Activated T-helper 2 cell treated with anti-CD3 and anti-CD28 coated beads, Interferon-gamma antibody, Interleukin-2, Interleukin-4, amounts not matched to agents 10 μg/mL and 5 μg/mL and 100 μg/mL, durations not matched to agents 14 hours and 24 hours and 36 hours (primary cell): ENCODE measurements at regions of chr1 and their contacts with region 1.

Region 1: DNA sequence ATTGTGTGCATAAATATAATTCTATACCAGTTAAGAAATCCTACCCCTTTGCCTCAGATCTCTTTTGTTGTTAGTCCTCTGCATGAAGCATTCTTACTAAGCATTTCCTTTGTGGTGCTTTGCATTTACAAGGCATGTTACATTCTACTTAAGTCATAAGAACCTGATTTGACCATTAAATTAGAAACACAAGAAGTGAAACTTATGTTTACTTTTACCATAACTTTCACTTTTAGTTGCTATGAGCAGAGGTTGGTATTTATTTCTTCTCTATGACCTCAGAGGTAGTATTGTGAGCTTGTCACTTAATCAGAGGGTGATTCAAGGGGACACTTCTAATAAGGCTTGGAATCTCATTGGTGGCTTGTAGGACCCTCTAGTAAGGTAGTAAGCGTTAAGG is 9.0 kb downstream of the FAM20B start:
- DNase-seq: no peak
- H3K4me3 Mint-ChIP-seq: no peak overlapping the region
- H3K27ac Mint-ChIP-seq: peak overlapping the region; percentile 82
- H3K4me1 Mint-ChIP-seq: peaks cover 77% of the 10 kb centered on the region
- H3K27me3 Mint-ChIP-seq: no peaks in the 10 kb centered on the region

Region 2: GRCh38 chr1:179046808-179047635 is 12.3 kb after region 1 on chr1:
- intact Hi-C with region 1: no loop called
- DNase-seq: no peak
- H3K4me3 Mint-ChIP-seq: no peak overlapping the region
- H3K27ac Mint-ChIP-seq: no peak overlapping the region
- H3K4me1 Mint-ChIP-seq: peaks cover 4% of the 10 kb centered on the region
- H3K27me3 Mint-ChIP-seq: no peaks in the 10 kb centered on the region

Region 3: GRCh38 chr1:179206812-179207211 is 172.1 kb after region 1 on chr1:
- intact Hi-C with region 1: no loop called
- DNase-seq: no peak
- H3K4me3 Mint-ChIP-seq: no peak overlapping the region
- H3K27ac Mint-ChIP-seq: no peak overlapping the region
- H3K4me1 Mint-ChIP-seq: peaks cover 12% of the 10 kb centered on the region
- H3K27me3 Mint-ChIP-seq: no peaks in the 10 kb centered on the region

Region 4: GRCh38 chr1:179954493-179955297 is 920.0 kb after region 1 on chr1 and contains the start of gene CEP350:
- intact Hi-C with region 1: loop called (anchors 5 kb)
- DNase-seq: peak; percentile 98
- H3K4me3 Mint-ChIP-seq: peak within 1 kb of the TSS; percentile 87
- H3K27ac Mint-ChIP-seq: peak within 1 kb of the TSS; percentile 98
- H3K4me1 Mint-ChIP-seq: peaks cover 34% of the 10 kb centered on the region
- H3K27me3 Mint-ChIP-seq: no peaks in the 10 kb centered on the region
- total RNA-seq, gene CEP350: 41.2 and 43.7 TPM in 2 replicates